ENCODE measurements at regions of chr5 and their contacts with region 1.

Region 1: GRCh38 chr5:119389288-119390030 is 33.6 kb downstream of the TNFAIP8 start:
- DNase-seq: no peak
- H3K4me3 Mint-ChIP-seq: no peak overlapping the region
- H3K27ac Mint-ChIP-seq: peak overlapping the region; percentile 81
- H3K4me1 Mint-ChIP-seq: peaks cover 89% of the 10 kb centered on the region
- H3K27me3 Mint-ChIP-seq: no peaks in the 10 kb centered on the region

Region 2: DNA sequence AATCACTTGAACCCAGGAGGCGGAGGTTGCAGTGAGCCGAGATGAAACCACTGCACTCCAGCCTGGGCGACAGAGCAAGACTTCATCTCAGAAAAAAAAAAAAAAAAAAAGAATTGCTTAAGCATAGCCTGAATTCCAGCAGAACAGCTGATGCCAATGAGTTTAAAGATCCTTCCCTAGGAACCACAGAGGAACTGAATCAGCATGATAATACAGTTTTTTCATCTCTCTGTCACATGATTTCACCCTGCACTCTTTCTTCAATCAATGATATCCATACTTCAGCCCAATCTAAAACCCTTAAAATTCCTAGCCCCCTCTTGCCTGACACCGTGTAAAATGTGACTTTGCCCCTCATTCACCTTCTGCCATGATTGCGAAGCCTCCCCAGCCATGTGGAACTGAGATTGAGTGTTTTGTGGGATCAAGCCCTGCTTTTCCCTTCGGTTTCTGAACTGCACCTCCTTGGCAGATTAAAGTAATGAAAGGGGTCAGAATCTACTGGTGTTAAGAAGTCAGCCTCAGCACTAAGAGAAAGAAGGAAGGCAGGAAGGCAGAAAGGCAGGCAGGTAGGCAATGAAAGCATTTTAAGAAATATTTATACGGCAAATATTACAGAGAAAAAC is 339.5 kb before region 1 on chr5:
- CTCF ChIA-PET with region 1: no interaction called
- intact Hi-C with region 1: no loop called
- DNase-seq: no peak
- H3K4me3 Mint-ChIP-seq: no peak overlapping the region
- H3K27ac Mint-ChIP-seq: no peak overlapping the region
- H3K4me1 Mint-ChIP-seq: no peaks in the 10 kb centered on the region
- H3K27me3 Mint-ChIP-seq: no peaks in the 10 kb centered on the region

Region 3: GRCh38 chr5:119373449-119373858 is 16.0 kb before region 1 on chr5:
- CTCF ChIA-PET with region 1: interaction called, 5 read pairs
- intact Hi-C with region 1: loop called (anchors 1 kb)
- DNase-seq: no peak
- H3K4me3 Mint-ChIP-seq: no peak overlapping the region
- H3K27ac Mint-ChIP-seq: peak overlapping the region; percentile 54
- H3K4me1 Mint-ChIP-seq: peaks cover 73% of the 10 kb centered on the region
- H3K27me3 Mint-ChIP-seq: no peaks in the 10 kb centered on the region

Region 4: GRCh38 chr5:119439140-119439631 is 49.7 kb after region 1 on chr5:
- CTCF ChIA-PET with region 1: no interaction called
- intact Hi-C with region 1: no loop called
- DNase-seq: peak; percentile 17
- H3K4me3 Mint-ChIP-seq: peak overlapping the region; percentile 75
- H3K27ac Mint-ChIP-seq: peak overlapping the region; percentile 56
- H3K4me1 Mint-ChIP-seq: peaks cover 6% of the 10 kb centered on the region
- H3K27me3 Mint-ChIP-seq: peaks cover 7% of the 10 kb centered on the region

Measured in activated naive CD4-positive, alpha-beta T cell treated with anti-CD3 and anti-CD28 coated beads for 36 hours (primary cell).